Ovary (tissue), 10 donors: ENCODE measurements at regions of chr18 and their contacts with region 1.

Region 1: GRCh38 chr18:76349067-76349715 is 145.9 kb downstream of the ZNF516 start:
- DNase-seq: peak; percentile 64 to 83 (median 78)
- H3K4me3 ChIP-seq: no peak overlapping the region
- H3K27ac ChIP-seq: no peak overlapping the region
- H3K4me1 ChIP-seq: peaks cover 3% of the 10 kb centered on the region
- H3K27me3 ChIP-seq: no peaks in the 10 kb centered on the region
- CTCF ChIP-seq: peak; percentile 62 to 90 (median 89)
- EP300 ChIP-seq: no peak
- POLR2A ChIP-seq: no peak

Region 2: DNA sequence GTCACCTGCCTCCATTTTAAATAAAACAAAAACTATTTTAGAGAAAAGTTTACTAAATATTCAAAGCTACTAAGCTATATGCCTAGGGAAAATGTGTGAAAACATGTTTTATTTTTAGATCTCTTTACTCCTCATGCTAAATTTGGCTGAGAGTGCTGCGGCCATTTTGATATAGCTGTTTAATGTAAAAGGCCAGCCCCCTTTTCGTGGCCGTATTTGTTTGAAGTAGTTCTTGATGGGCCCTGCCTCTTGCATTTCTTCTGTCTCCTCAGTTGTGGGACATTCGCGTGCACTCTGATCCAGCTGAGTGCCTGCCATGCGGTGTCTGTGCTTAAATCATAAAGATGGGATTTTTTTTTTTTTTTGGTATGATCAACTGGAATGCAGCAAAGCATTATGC is 1687.5 kb before region 1 on chr18:
- intact Hi-C with region 1: loop called in 1 of 4 experiments (anchors 5 kb)
- DNase-seq: no peak
- H3K4me3 ChIP-seq: no peak overlapping the region
- H3K27ac ChIP-seq: no peak overlapping the region
- H3K4me1 ChIP-seq: no peaks in the 10 kb centered on the region
- H3K27me3 ChIP-seq: no peaks in the 10 kb centered on the region
- CTCF ChIP-seq: no peak
- EP300 ChIP-seq: no peak
- POLR2A ChIP-seq: no peak

Region 3: GRCh38 chr18:75204269-75204731 is 1144.9 kb before region 1 on chr18:
- intact Hi-C with region 1: loop called in 1 of 4 experiments (anchors 5 kb)
- DNase-seq: peak in 4 of 5 donors; percentile 36 to 72 (median 62)
- H3K4me3 ChIP-seq: peak overlapping the region; percentile 40
- H3K27ac ChIP-seq: peak overlapping the region; percentile 60 to 99
- H3K4me1 ChIP-seq: peaks cover 4% of the 10 kb centered on the region
- H3K27me3 ChIP-seq: no peaks in the 10 kb centered on the region
- CTCF ChIP-seq: no peak
- EP300 ChIP-seq: no peak
- POLR2A ChIP-seq: no peak